ENCODE measurements at regions of chr5 and their contacts with region 1.

Region 1: DNA sequence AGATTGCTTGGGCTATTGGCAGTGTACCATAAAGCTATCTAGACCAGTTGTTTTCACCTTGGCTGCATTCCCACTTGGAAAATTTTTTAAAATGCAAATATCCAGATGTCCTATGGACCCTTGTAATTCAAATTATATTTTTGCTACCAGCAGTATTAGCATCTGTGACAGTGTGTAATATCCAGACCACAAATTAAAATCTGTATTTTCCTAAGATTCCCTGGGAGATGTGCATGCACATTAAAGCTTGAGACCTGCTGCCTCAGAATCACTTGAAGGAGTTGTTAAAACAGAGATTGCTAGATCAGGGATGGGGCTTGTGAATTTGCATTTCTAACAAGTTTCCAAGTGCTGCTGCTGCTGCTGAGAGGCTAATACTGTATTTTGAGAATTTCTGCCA is 381.2 kb upstream of the PDE4D start:
- DNase-seq: no peak

Region 2: GRCh38 chr5:60161340-60161934 is 113.3 kb before region 1 on chr5:
- intact Hi-C with region 1: no loop called
- DNase-seq: no peak

Region 3: DNA sequence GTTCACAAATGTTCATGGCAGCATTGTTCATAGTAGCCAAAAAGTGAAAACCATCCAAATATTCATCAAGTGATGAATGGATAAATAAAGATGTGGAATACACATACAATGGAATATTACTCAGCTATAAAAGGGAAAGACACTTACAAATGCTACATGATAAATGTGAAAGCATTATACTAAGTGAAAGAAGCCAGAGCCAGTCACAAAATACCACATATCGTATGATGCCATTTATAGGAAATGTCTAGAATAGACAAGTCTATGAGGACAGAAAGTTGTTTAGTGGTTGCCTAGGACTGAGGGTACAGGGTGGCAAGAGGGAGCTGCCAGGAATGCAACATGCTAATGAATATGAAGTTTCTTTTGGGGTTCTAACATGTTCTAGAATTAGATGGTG is 276.5 kb after region 1 on chr5:
- intact Hi-C with region 1: no loop called
- DNase-seq: no peak

Region 4: DNA sequence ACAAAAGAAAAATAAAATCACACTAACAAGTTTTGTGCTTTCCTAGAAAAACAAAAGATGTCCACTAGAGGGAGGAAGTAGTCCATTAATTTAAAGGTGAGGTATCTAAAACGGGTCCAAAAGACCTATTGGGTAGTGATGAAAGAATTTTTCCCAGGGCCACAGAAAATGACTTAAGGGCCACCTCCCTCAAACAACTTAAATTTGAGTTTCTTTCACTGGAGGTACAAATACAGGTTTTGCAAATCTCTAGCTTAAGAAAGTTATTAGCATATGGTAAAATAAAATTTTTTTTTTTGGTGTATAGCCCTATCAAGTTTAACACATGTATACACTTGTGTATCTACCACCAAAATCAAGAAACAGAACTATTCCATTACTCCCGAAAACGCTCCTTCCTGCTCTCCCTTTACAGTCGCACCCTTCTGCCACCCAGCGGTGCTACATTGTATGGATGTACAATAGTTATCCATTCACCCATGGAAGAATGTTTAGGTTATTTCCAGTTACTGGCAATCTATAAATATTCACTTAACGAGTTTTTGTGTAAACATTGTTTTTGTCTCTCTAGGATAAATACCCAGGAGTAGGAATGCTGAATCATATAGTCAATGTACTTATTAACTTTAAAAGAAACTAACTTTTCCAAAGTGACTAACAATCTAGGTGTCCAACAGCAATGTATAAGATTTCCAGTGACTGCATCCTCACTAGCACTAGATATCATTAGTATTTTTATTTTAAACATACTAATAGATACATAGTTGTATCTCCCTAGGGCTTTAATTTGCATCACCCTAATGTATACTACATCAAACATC is 403.3 kb after region 1 on chr5:
- intact Hi-C with region 1: loop called (anchors 10 kb)
- DNase-seq: no peak